ENCODE measurements at regions of chr2 and their contacts with region 1.

Region 1: GRCh38 chr2:61670591-61671501 is 132.7 kb upstream of the XPO1 start:
- DNase-seq: peak; percentile 42
- ATAC-seq: peak; percentile 67
- H3K4me3 Mint-ChIP-seq: peak overlapping the region; percentile 72
- H3K27ac Mint-ChIP-seq: peak overlapping the region; percentile 88
- H3K4me1 Mint-ChIP-seq: peaks cover 20% of the 10 kb centered on the region
- H3K27me3 Mint-ChIP-seq: no peaks in the 10 kb centered on the region

Region 2: DNA sequence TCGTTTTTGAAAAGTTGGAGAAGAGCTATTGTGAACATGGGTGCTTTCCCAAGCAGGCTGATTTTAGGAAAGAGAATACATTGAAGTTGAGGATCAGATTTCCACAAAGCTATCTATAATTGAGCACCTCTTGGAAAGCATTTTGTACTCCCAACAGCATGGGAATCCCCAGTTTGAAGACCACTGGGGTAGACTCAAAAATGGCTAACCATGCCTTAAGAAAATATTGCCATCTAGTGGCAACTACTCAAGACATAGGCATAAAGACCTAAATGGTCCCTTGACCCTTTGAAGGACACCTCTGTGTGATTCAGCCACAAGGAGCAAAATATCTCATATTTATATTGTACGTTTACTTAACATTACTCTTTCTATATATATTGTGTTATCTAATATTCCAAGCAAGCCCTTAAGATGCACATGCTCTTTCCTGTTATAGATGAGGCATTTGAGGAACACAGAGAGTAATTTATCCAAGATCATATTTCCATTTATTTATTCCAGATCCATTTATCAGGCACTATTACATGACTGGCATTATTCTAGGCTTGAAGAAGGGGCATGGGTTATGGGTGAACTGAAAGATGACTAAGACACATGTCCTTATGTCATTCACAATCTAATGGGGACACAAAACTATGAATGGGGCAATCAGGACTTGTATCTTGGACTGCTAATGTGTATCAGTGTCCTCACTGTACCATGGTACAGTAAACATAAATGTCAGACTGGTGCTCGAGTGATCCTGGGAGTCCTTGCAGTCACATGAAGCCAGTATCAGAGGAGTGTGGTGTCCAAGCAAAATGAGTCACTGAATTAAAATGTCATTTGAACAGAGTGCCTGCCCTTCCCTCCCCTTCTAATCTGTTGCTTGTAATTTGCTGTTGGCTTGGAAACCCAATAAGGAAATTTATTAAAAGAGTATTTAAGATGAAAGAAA is 11.7 kb before region 1 on chr2:
- CTCF ChIA-PET with region 1: interaction called, 16 read pairs
- POLR2A ChIA-PET with region 1: no interaction called
- DNase-seq: no peak
- ATAC-seq: peak; percentile 42
- H3K4me3 Mint-ChIP-seq: no peak overlapping the region
- H3K27ac Mint-ChIP-seq: no peak overlapping the region
- H3K4me1 Mint-ChIP-seq: peaks cover 7% of the 10 kb centered on the region
- H3K27me3 Mint-ChIP-seq: peaks cover 2% of the 10 kb centered on the region

Region 3: DNA sequence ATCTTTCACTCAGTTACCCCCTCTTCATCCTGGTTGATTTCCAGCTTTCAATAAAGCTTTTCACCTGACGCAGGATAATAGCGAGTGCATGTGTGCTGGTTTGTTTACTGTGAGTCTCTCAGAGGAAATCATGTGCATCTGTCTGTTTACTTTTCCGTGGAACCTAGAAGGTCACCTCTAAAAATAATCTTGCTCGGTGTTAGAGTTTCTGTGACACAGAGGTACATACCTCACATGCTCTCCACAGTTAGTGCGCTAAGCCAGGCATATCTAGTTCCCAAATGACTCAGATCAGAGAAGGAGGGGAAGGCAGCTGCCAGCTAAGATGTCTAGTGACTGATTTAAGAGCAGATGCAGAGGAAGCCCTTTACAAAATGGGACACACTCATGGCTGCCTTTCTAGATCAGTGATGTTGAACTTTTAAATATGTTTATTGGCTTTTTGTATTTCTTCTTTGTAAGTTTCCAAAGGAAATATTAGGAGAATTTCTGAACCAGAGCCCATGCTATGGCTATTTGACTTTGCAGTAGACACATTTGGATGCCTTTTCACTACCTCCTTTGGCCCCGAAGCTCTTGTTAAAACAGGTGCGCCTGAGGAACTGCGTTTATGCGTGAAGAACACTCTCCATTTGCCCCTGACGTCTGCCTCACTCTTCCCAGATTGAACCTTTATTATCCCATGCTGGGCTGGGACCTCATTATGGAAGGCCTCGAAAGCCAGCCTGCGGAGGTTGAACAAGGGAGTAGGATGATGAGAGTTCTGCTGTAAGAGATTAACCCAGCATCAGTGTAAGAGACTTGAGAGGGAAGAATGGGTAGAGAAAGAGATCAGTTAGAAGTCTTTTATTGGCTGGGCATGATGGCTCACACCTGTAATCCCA is 37.4 kb after region 1 on chr2:
- CTCF ChIA-PET with region 1: no interaction called
- POLR2A ChIA-PET with region 1: no interaction called
- DNase-seq: no peak
- ATAC-seq: no peak
- H3K4me3 Mint-ChIP-seq: no peak overlapping the region
- H3K27ac Mint-ChIP-seq: no peak overlapping the region
- H3K4me1 Mint-ChIP-seq: no peaks in the 10 kb centered on the region
- H3K27me3 Mint-ChIP-seq: peaks cover 2% of the 10 kb centered on the region